Ovary (tissue), 10 donors: ENCODE measurements at regions of chr7 and their contacts with region 1.

Region 1: GRCh38 chr7:76047811-76048667 is at the starts of genes MDH2 and STYXL1:
- DNase-seq: peak; percentile 91 to 95 (median 93)
- H3K4me3 ChIP-seq: peak within 1 kb of the TSS; percentile 66
- H3K27ac ChIP-seq: peak within 1 kb of the TSS; percentile 23 to 71
- H3K4me1 ChIP-seq: peaks cover 9% of the 10 kb centered on the region
- H3K27me3 ChIP-seq: no peaks in the 10 kb centered on the region
- CTCF ChIP-seq: peak in 1 of 3 donors; percentile 10
- EP300 ChIP-seq: no peak
- POLR2A ChIP-seq: peak; percentile 78
- total RNA-seq, gene MDH2: 38.4 to 124 (median 109) TPM
- total RNA-seq, gene STYXL1: 15.7 to 37.4 (median 26.5) TPM

Region 2: DNA sequence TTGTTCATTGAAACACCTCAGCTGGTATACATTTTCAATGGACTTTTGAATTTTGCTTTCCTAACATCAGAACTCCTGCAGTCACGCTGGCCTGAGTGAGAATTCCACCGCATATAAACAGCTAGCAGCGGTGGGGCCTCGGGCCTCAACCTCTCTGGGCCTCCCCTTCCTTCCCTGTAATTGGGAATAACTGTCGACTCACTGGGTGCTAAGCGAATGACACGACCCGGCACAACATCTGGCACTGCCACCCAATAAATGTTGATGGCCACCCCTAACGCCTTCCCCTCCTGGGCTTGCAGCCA is 975.1 kb before region 1 on chr7:
- intact Hi-C with region 1: loop called in 1 of 4 experiments (anchors 5 kb)
- DNase-seq: no peak
- H3K4me3 ChIP-seq: peak overlapping the region; percentile 96
- H3K27ac ChIP-seq: peak overlapping the region; percentile 62 to 94
- H3K4me1 ChIP-seq: peaks cover 9% of the 10 kb centered on the region
- H3K27me3 ChIP-seq: no peaks in the 10 kb centered on the region
- CTCF ChIP-seq: no peak
- EP300 ChIP-seq: no peak
- POLR2A ChIP-seq: no peak

Region 3: DNA sequence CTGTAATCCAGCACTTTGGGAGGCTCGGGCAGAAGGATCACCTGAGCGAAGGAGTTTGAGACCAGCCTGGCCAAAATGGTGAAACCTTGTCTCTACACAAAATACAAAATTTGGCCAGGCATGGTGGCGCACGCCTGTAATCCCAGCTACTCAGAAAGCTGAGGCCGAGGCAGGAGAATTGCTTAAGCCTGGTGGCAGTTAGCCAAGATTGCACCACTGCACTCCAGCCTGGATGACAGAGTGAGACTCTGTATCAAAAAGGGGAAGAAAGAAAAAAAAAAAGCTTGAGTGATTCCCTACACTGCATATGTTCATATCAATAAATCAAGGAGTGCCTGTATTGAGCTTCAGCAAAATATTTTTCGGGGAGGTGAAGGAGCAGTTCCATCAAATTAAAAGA is 107.9 kb after region 1 on chr7:
- intact Hi-C with region 1: loop called in 1 of 4 experiments (anchors 10 kb)
- DNase-seq: peak in 1 of 5 donors; percentile 51
- H3K4me3 ChIP-seq: no peak overlapping the region
- H3K27ac ChIP-seq: no peak overlapping the region
- H3K4me1 ChIP-seq: no peaks in the 10 kb centered on the region
- H3K27me3 ChIP-seq: no peaks in the 10 kb centered on the region
- CTCF ChIP-seq: no peak
- EP300 ChIP-seq: no peak
- POLR2A ChIP-seq: no peak